ENCODE measurements at regions of chr3 and their contacts with region 1.

Region 1: GRCh38 chr3:48232734-48233133 is 8.2 kb upstream of the ZNF589 start:
- DNase-seq: peak; percentile 34
- ATAC-seq: peak; percentile 98
- H3K4me3 Mint-ChIP-seq: peak overlapping the region; percentile 32
- H3K27ac Mint-ChIP-seq: peak overlapping the region; percentile 19
- H3K4me1 Mint-ChIP-seq: peaks cover 27% of the 10 kb centered on the region
- H3K27me3 Mint-ChIP-seq: no peaks in the 10 kb centered on the region
- CTCF ChIP-seq: no peak

Region 2: GRCh38 chr3:48039487-48040190 is 193.1 kb before region 1 on chr3:
- CTCF ChIA-PET with region 1: no interaction called
- POLR2A ChIA-PET with region 1: no interaction called
- intact Hi-C with region 1: no loop called
- DNase-seq: no peak
- ATAC-seq: no peak
- H3K4me3 Mint-ChIP-seq: no peak overlapping the region
- H3K27ac Mint-ChIP-seq: no peak overlapping the region
- H3K4me1 Mint-ChIP-seq: no peaks in the 10 kb centered on the region
- H3K27me3 Mint-ChIP-seq: no peaks in the 10 kb centered on the region
- CTCF ChIP-seq: no peak

Region 3: GRCh38 chr3:48548729-48549705 is 316.3 kb after region 1 on chr3:
- CTCF ChIA-PET with region 1: no interaction called
- POLR2A ChIA-PET with region 1: no interaction called
- intact Hi-C with region 1: loop called (anchors 1 kb)
- DNase-seq: peak; percentile 66
- ATAC-seq: peak; percentile 100
- H3K4me3 Mint-ChIP-seq: no peak overlapping the region
- H3K27ac Mint-ChIP-seq: no peak overlapping the region
- H3K4me1 Mint-ChIP-seq: no peaks in the 10 kb centered on the region
- H3K27me3 Mint-ChIP-seq: no peaks in the 10 kb centered on the region
- CTCF ChIP-seq: no peak